Right cardiac atrium (tissue), 5 donors: ENCODE measurements at regions of chr21 and their contacts with region 1.

Region 1: GRCh38 chr21:42117229-42117966 is 46.3 kb downstream of the UMODL1 start:
- DNase-seq: peak; percentile 63 to 86 (median 80)
- ATAC-seq: peak; percentile 77 to 85
- H3K4me3 ChIP-seq: no peak overlapping the region
- H3K27ac ChIP-seq: no peak overlapping the region
- H3K4me1 ChIP-seq: no peaks in the 10 kb centered on the region
- H3K27me3 ChIP-seq: no peaks in the 10 kb centered on the region

Region 2: DNA sequence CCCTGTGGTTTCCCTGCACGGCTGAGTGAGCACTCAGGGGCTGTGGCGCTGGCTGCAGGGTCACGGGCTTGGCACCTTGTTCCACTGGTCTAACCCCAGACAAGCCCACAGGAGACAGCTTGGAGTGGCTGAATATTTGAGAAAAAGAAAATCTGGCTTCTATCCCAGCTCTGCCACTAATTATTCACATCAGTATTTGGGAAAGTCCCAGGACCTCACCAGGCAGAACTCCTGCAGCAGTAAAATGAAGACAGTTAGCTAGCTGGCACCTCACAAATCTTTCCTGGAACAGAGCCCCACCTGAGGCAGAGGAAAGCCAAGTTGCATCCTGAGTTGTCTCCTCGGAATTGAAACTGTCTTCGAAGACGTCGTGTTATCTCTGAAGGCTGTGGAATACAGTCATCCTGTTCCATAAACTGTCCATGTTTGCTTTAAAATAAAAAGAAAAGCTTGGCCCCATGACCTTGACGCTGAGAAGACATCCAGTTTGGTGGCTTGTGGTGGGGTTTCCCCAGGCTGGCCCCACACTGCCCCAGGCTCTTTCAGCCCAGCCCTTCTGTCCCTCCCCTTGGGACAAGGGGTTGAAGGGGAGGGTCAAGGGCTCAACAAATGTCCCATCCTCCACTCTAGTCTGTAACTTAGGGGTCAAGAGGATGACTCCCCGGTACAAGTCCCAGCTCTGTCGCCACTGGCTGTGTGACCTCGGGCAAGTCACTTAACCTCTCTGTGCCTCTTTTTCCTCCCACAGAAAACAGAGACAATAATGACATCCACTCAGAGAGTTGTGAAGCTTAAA is 515.6 kb before region 1 on chr21:
- intact Hi-C with region 1: loop called in 1 of 4 experiments (anchors 10 kb)
- DNase-seq: no peak
- ATAC-seq: no peak
- H3K4me3 ChIP-seq: no peak overlapping the region
- H3K27ac ChIP-seq: no peak overlapping the region
- H3K4me1 ChIP-seq: no peaks in the 10 kb centered on the region
- H3K27me3 ChIP-seq: no peaks in the 10 kb centered on the region

Region 3: DNA sequence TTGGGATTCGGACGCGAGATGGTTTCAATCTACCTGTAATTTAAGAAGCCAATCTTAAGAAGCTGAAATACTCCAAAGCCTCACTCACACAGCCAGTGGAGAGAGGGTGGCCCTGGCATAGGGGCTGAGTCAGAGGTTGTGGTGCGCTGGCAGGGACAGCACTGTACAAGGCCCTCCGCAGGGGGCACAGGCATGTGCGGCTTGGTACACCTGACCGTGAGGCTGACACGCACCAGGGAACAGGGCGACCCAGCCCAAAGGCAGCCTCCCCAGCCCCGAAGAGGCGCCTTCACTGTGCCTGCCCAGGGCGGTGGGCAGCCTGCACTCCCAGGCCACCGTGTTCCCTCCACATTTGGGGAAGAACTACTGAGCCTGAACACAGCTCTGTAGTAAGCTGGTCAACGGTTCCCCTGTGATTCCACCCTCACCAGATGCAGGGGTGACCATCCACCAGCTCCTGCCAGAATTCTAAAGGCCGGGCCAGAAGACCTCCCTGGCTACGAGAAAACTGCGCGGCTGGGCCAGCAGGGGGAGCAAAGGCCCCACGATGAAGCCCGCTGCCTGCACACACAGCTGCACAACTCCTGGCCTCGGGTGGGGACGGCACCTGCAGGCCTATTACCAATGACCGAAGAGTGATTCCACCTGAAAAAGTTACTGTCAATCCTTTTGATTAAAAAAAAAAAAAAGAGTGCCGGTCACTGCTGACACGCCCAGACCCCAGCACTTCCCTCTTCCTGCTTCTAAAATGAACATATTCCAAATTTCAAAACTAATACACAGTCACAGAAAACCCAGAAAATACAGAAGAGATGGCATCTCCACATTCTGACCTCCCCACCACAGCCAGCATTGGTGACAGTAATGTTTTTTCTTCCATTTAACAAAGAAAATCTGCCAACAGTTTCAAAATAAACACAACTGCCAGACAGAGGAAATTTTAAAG is 300.9 kb before region 1 on chr21:
- intact Hi-C with region 1: loop called (anchors 2 to 5 kb)
- DNase-seq: peak; percentile 68 to 84 (median 82)
- ATAC-seq: peak; percentile 75 to 88
- H3K4me3 ChIP-seq: no peak overlapping the region
- H3K27ac ChIP-seq: no peak overlapping the region
- H3K4me1 ChIP-seq: no peaks in the 10 kb centered on the region
- H3K27me3 ChIP-seq: no peaks in the 10 kb centered on the region

Region 4: GRCh38 chr21:41888749-41889376 is 228.5 kb before region 1 on chr21:
- intact Hi-C with region 1: no loop called
- DNase-seq: no peak
- ATAC-seq: peak; percentile 36 to 39
- H3K4me3 ChIP-seq: no peak overlapping the region
- H3K27ac ChIP-seq: no peak overlapping the region
- H3K4me1 ChIP-seq: no peaks in the 10 kb centered on the region
- H3K27me3 ChIP-seq: no peaks in the 10 kb centered on the region

Region 5: GRCh38 chr21:41899426-41900202 is 217.8 kb before region 1 on chr21:
- intact Hi-C with region 1: loop called in 1 of 4 experiments (anchors 10 kb)
- DNase-seq: no peak
- ATAC-seq: no peak
- H3K4me3 ChIP-seq: no peak overlapping the region
- H3K27ac ChIP-seq: no peak overlapping the region
- H3K4me1 ChIP-seq: no peaks in the 10 kb centered on the region
- H3K27me3 ChIP-seq: no peaks in the 10 kb centered on the region

Region 6: DNA sequence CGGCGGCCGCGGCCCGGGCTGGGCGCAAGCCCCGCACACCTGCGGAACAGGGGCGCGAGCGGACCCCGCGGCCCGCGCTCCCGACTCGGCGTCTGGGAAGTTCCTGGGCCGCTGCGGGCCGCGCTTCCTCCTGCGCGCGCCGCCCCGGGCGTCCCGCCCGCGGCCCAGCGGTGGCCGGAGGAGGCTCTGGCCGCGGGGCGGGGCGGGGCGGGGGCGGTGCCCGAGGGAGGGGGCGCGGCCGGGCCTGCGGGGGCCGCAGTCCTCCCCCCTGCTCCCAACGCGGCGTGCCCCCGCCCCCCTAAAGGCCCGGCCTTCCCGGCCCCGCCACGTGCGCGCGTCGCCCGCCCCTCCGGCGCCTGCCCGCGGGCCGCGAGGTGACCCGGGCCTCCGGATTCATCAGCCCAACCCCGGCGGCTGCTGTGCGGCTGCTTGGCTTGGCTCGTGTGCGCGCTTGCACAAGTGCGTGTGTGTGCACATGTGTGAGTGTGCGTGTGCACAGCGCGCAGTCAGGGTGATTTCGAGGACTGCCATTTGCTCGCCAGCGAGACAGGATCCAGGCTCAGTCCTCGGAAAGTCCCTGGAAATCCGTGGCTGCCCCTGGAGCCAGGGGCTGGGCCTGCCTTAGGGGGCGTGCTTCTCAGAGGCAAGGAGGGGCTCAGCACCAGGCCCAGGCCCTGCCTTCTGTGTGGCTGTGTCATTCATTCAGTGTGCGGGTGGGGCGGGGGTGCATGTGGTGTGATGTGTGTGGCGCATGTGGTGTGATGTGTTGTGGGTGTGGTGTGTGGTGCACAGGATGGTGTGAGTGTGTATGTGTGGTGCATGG is 163.4 kb before region 1 on chr21 and contains the start of gene C2CD2:
- intact Hi-C with region 1: loop called in 1 of 4 experiments (anchors 10 kb)
- DNase-seq: peak; percentile 81 to 92 (median 88)
- ATAC-seq: peak; percentile 83 to 88
- H3K4me3 ChIP-seq: peak within 1 kb of the TSS; percentile 86
- H3K27ac ChIP-seq: peak within 1 kb of the TSS; percentile 26
- H3K4me1 ChIP-seq: peaks cover 8% of the 10 kb centered on the region
- H3K27me3 ChIP-seq: no peaks in the 10 kb centered on the region
- total RNA-seq, gene C2CD2: 8.0 to 10.0 (median 8.4) TPM